H1 (cell line): ENCODE measurements at regions of chr9 and their contacts with region 1.

Region 1: DNA sequence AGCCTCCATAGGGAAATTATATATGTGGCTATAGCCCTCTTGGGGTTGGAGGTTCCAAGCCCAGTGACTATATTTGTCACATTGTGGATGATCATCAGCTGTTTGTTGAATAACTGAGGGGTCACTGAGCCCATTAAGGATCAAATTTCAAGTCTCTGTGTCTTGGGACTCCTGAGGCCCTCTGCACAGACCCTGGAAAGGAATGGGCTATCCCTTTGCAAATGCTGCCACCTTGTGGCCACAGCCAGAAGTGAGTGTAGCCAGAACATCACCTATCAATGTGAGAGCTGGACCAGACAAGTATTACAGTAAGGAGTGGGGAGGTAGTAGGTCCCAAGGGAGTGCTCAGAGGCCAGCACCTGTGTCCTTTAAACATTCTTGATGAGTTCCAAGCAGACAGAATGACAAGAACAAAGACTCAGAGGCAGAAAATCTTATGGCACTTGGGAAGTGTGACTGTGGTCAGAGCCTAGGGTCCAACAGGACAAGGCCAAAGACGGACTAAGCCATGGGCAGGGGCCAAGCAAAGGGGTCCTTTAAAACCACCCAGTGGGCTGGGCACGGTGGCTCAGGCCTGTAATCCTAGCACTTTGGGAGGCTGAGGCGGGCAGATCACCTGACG is 8.2 kb downstream of the RPP25L start:
- DNase-seq: peak in 1 of 2 experiments; percentile 96
- H3K4me3 ChIP-seq: no peak overlapping the region
- H3K27ac ChIP-seq: no peak overlapping the region
- H3K4me1 ChIP-seq: peaks cover 0 to 5% (median 2%) of the 10 kb centered on the region in 4 experiments; a peak in 2 of 7 replicates
- H3K27me3 ChIP-seq: peaks cover 0 to 3% (median 0%) of the 10 kb centered on the region in 4 experiments; a peak in 2 of 7 replicates
- CTCF ChIP-seq: peak; percentile 77 to 96 (median 96)
- EP300 ChIP-seq: no peak
- POLR2A ChIP-seq: no peak
- RAD21 ChIP-seq: peak; percentile 99

Region 2: GRCh38 chr9:34430843-34431437 is 172.8 kb before region 1 on chr9:
- CTCF ChIA-PET with region 1: interaction called, 28 read pairs
- POLR2A ChIA-PET with region 1: no interaction called
- DNase-seq: peak; percentile 34 to 69
- H3K4me3 ChIP-seq: no peak overlapping the region
- H3K27ac ChIP-seq: no peak overlapping the region
- H3K4me1 ChIP-seq: no peaks in the 10 kb centered on the region
- H3K27me3 ChIP-seq: no peaks in the 10 kb centered on the region
- CTCF ChIP-seq: no peak
- EP300 ChIP-seq: no peak
- POLR2A ChIP-seq: no peak
- RAD21 ChIP-seq: peak in 1 of 2 experiments; percentile 8; a peak in 1 of 4 replicates

Region 3: GRCh38 chr9:34458013-34458958 is 145.4 kb before region 1 on chr9 and contains the starts of genes DNAI1 and FAM219A:
- CTCF ChIA-PET with region 1: interaction called, 14 read pairs
- POLR2A ChIA-PET with region 1: no interaction called
- DNase-seq: peak; percentile 95 to 99
- H3K4me3 ChIP-seq: peak within 1 kb of the TSS; percentile 64 to 87 (median 84)
- H3K27ac ChIP-seq: no peak within 1 kb of the TSS
- H3K4me1 ChIP-seq: peaks cover 0 to 12% (median 6%) of the 10 kb centered on the region in 4 experiments; a peak in 6 of 7 replicates
- H3K27me3 ChIP-seq: peaks cover 0 to 12% (median 7%) of the 10 kb centered on the region in 4 experiments; a peak in 4 of 7 replicates
- CTCF ChIP-seq: no peak
- EP300 ChIP-seq: no peak
- POLR2A ChIP-seq: peak in 1 of 2 experiments; percentile 67; a peak in 1 of 3 replicates
- RAD21 ChIP-seq: no peak
- total RNA-seq, gene DNAI1: 0.37 and 1.1 TPM in 2 replicates
- total RNA-seq, gene FAM219A: 10.4 and 10.6 TPM in 2 replicates

Region 4: DNA sequence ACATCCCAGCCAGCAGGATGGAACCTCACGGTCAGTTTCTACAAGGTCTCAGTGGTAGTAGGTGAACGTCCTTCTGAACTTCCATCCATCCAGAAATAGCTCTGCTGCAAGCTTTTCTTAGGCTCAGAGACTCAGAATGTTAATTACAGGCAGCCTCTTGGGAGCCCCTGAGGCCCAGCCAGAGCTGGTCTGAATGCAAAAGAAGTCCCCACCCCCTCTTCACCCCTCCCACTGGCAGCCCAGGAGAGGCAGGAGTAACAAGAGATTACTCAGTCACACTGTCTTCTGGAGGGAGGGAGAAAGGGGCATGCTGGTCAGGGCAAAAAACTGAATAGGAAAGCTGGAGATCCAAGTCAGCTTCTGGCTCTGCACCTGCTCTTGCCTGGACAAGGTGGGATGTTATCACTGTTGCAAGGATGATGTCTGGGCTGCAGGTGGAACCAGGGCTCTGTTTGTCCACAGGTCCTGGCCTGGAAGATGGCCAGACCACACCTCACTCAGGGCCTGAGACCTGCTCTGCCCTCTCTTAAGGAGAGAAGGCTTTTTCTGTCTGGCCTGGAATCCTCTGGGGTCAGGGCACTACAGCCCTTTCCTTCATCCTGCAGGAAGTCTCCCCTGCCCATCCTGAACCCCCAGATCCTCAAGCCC is 90.0 kb before region 1 on chr9:
- CTCF ChIA-PET with region 1: interaction called, 40 read pairs
- POLR2A ChIA-PET with region 1: no interaction called
- DNase-seq: peak in 1 of 2 experiments; percentile 63
- H3K4me3 ChIP-seq: peak overlapping the region in 1 of 4 experiments; percentile 37; a peak in 1 of 8 replicates
- H3K27ac ChIP-seq: 0 out of 2 replicates have a peak overlapping the region, but pooled peaks have one; percentile 66
- H3K4me1 ChIP-seq: peaks cover 16 to 33% (median 20%) of the 10 kb centered on the region in 4 experiments
- H3K27me3 ChIP-seq: no peaks in the 10 kb centered on the region; a peak in 1 of 7 replicates
- CTCF ChIP-seq: no peak
- EP300 ChIP-seq: no peak
- POLR2A ChIP-seq: no peak
- RAD21 ChIP-seq: no peak

Region 5: GRCh38 chr9:34554211-34555001 is 49.3 kb before region 1 on chr9:
- CTCF ChIA-PET with region 1: interaction called, 214 read pairs
- POLR2A ChIA-PET with region 1: interaction called, 3 read pairs
- DNase-seq: peak in 1 of 2 experiments; percentile 45
- H3K4me3 ChIP-seq: no peak overlapping the region
- H3K27ac ChIP-seq: no peak overlapping the region
- H3K4me1 ChIP-seq: peaks cover 5 to 21% (median 17%) of the 10 kb centered on the region in 4 experiments
- H3K27me3 ChIP-seq: no peaks in the 10 kb centered on the region; a peak in 2 of 7 replicates
- CTCF ChIP-seq: no peak
- EP300 ChIP-seq: no peak
- POLR2A ChIP-seq: no peak
- RAD21 ChIP-seq: 0 out of 4 replicates have a peak, but pooled peaks of 1 of the 2 experiments have one; percentile 2

Region 6: GRCh38 chr9:34591248-34591916 is 12.3 kb before region 1 on chr9:
- CTCF ChIA-PET with region 1: interaction called, 81 read pairs
- POLR2A ChIA-PET with region 1: interaction called, 8 read pairs
- DNase-seq: peak in 1 of 2 experiments; percentile 98
- H3K4me3 ChIP-seq: peak overlapping the region in 2 of 4 experiments; percentile 51 to 74; a peak in 4 of 8 replicates
- H3K27ac ChIP-seq: no peak overlapping the region
- H3K4me1 ChIP-seq: peaks cover 4 to 30% (median 16%) of the 10 kb centered on the region in 4 experiments
- H3K27me3 ChIP-seq: peaks cover 67 to 80% (median 75%) of the 10 kb centered on the region in 4 experiments
- CTCF ChIP-seq: peak; percentile 92 to 98 (median 96)
- EP300 ChIP-seq: no peak
- POLR2A ChIP-seq: no peak
- RAD21 ChIP-seq: peak; percentile 91 to 93

Region 7: GRCh38 chr9:34637356-34638137 is 33.8 kb after region 1 on chr9 and contains the start of gene SIGMAR1:
- CTCF ChIA-PET with region 1: interaction called, 401 read pairs
- POLR2A ChIA-PET with region 1: interaction called, 3 read pairs
- DNase-seq: peak; percentile 63 to 96
- H3K4me3 ChIP-seq: peak within 1 kb of the TSS; percentile 71 to 78 (median 77)
- H3K27ac ChIP-seq: no peak within 1 kb of the TSS; the same call in 1 of the 2 replicates
- H3K4me1 ChIP-seq: peaks cover 2 to 11% (median 8%) of the 10 kb centered on the region in 4 experiments; a peak in 4 of 7 replicates
- H3K27me3 ChIP-seq: peaks cover 0 to 6% (median 3%) of the 10 kb centered on the region in 4 experiments; a peak in 2 of 7 replicates
- CTCF ChIP-seq: no peak
- EP300 ChIP-seq: peak in 1 of 2 experiments; percentile 98; a peak in 2 of 3 replicates
- POLR2A ChIP-seq: peak; percentile 49 to 61; a peak in 2 of 3 replicates
- RAD21 ChIP-seq: no peak
- total RNA-seq, gene SIGMAR1: 84.2 and 86.8 TPM in 2 replicates

Region 8: DNA sequence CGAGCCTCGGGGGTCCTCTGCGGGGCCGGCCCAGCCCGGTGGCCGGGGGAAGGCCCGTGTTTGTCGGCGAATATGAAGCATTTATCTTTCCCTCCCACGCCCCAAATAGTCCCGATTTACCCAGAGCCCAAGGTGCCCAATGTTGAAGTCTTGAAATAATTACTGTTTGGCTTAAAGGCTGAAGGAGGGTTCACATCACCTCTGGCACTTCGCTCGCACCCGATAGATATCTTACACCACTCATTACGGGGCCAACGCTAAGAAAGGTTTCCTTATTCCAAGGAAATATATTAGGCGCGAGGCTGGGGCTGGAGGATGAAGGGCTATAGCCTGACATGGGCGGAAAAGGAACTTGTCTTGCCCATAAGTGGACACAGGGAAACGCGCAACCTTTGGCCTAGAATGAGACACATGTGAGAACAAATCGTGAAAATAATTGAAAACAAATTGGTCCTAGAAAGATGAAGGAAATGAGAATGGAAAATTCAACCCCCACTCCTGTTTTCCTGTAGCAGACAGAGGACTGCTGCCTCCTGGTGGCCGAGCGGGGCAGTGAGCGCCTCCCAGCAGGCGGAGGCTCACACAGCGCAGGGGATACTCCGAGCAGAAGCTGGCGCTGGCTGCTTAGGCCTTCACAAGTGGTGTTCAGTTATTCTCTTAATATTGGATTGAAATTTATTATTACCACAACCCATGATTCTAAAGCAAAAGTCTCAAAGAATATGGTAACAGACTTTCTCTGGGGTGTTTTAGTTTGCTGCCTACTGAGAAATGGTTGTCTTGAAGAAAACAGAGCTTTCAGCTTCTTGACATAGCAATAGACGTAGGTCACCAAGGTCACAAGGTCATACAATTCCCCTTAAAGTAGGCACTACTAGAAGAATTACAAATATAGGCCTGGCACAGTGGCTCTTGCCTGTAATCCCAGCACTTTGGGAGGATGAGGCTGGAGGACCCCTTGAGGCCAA is 98.3 kb after region 1 on chr9:
- CTCF ChIA-PET with region 1: no interaction called
- POLR2A ChIA-PET with region 1: no interaction called
- DNase-seq: peak; percentile 21 to 92
- H3K4me3 ChIP-seq: peak overlapping the region; percentile 38 to 65 (median 45)
- H3K27ac ChIP-seq: no peak overlapping the region
- H3K4me1 ChIP-seq: peaks cover 0 to 5% (median 2%) of the 10 kb centered on the region in 4 experiments; a peak in 2 of 7 replicates
- H3K27me3 ChIP-seq: peaks cover 0 to 30% (median 18%) of the 10 kb centered on the region in 4 experiments; a peak in 6 of 7 replicates
- CTCF ChIP-seq: peak; percentile 97 to 98 (median 98)
- EP300 ChIP-seq: no peak
- POLR2A ChIP-seq: no peak
- RAD21 ChIP-seq: peak; percentile 77 to 81